Sigmoid colon (tissue), 7 donors: ENCODE measurements at regions of chr7 and their contacts with region 1.

Region 1: DNA sequence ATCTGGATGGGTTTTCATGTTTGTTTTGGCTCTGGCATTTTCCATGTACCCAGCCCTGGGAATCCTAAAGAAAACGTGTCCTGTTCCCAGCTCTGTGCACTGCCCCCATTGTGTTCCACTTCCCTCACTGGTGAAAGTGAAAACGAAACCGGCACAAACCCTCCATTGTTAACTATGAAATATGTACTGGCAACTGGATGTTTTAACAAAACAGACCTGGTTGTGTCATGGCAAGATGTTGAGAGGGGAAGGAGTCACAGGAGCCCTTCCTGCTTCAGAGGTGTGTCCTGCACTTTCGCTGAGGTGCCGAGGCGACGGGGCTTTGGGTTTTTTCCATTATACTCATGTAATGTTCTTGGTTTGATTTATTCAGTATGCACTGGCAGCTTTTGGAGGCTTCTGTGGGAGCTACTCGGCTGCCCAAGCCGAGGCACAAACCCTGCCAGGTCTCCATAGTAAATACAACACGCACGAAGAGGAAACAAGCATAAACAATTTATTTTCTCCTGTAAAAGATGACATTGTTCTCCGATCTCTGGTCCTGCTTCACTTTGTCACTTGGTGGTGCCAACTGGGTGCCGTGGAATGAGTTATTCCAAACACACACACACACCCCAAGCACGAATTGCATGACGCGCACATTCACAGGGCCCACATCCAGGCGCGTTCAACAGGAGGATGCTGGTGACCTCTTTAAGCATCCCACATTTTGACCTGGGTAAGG is 118.2 kb downstream of the CDK6 start:
- DNase-seq: peak; percentile 79
- H3K4me3 ChIP-seq: peak overlapping the region; percentile 35 to 55 (median 50)
- H3K27ac ChIP-seq: peak overlapping the region; percentile 81 to 89 (median 88)
- H3K4me1 ChIP-seq: peaks cover 0 to 39% (median 34%) of the 10 kb centered on the region in 4 donors
- H3K27me3 ChIP-seq: no peaks in the 10 kb centered on the region
- CTCF ChIP-seq: no peak
- EP300 ChIP-seq: no peak
- POLR2A ChIP-seq: peak in 1 of 2 donors; percentile 15

Region 2: GRCh38 chr7:92306153-92306552 is 412.0 kb before region 1 on chr7:
- intact Hi-C with region 1: no loop called
- DNase-seq: no peak
- H3K4me3 ChIP-seq: no peak overlapping the region
- H3K27ac ChIP-seq: no peak overlapping the region
- H3K4me1 ChIP-seq: no peaks in the 10 kb centered on the region
- H3K27me3 ChIP-seq: no peaks in the 10 kb centered on the region
- CTCF ChIP-seq: no peak
- EP300 ChIP-seq: no peak
- POLR2A ChIP-seq: no peak

Region 3: GRCh38 chr7:92461027-92462003 is 256.8 kb before region 1 on chr7:
- intact Hi-C with region 1: no loop called
- DNase-seq: no peak
- H3K4me3 ChIP-seq: no peak overlapping the region
- H3K27ac ChIP-seq: no peak overlapping the region
- H3K4me1 ChIP-seq: no peaks in the 10 kb centered on the region
- H3K27me3 ChIP-seq: no peaks in the 10 kb centered on the region
- CTCF ChIP-seq: peak in 2 of 4 experiments; percentile 21 to 47
- EP300 ChIP-seq: no peak
- POLR2A ChIP-seq: no peak

Region 4: DNA sequence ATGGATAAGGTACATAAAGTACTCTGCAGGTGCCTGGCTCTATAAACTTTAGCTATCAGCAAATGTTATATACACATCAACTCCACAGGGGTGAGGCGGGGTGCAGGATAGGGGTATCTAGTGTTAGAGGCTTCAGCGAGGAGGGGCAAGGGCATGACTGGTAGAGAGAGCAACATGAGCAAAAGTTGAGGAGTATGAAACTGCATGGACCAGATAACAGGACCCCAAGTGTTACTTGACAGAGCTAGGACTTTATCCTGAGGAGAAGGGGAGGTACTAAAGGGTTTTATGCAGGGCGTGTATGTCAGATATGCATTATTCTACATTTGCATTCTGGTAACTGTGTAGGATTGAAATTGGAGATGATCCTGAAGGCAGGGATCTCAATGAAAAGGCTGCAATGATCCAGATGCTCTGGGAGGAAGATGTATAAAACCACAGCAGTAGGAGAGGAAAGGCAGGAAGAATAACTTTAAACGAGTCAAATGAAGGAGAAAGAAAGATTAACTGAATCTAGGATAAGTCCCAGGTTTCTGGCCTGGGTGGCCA is 18.1 kb before region 1 on chr7:
- intact Hi-C with region 1: loop called (anchors 2 kb)
- DNase-seq: no peak
- H3K4me3 ChIP-seq: no peak overlapping the region
- H3K27ac ChIP-seq: no peak overlapping the region
- H3K4me1 ChIP-seq: peaks cover 0 to 41% (median 26%) of the 10 kb centered on the region in 4 donors
- H3K27me3 ChIP-seq: no peaks in the 10 kb centered on the region
- CTCF ChIP-seq: no peak
- EP300 ChIP-seq: no peak
- POLR2A ChIP-seq: no peak

Region 5: GRCh38 chr7:92768501-92769393 is 50.6 kb after region 1 on chr7:
- intact Hi-C with region 1: loop called (anchors 5 kb)
- DNase-seq: no peak
- H3K4me3 ChIP-seq: no peak overlapping the region
- H3K27ac ChIP-seq: peak overlapping the region; percentile 61 to 84 (median 76)
- H3K4me1 ChIP-seq: peaks cover 0 to 47% (median 37%) of the 10 kb centered on the region in 4 donors
- H3K27me3 ChIP-seq: no peaks in the 10 kb centered on the region
- CTCF ChIP-seq: no peak
- EP300 ChIP-seq: no peak
- POLR2A ChIP-seq: no peak